Cardiac septum (tissue), 1 donor: ENCODE measurements at regions of chr3 and their contacts with region 1.

Region 1: GRCh38 chr3:25156626-25157025 is 271.4 kb upstream of the RARB start:
- DNase-seq: no peak

Region 2: GRCh38 chr3:25044762-25045710 is 111.6 kb before region 1 on chr3:
- intact Hi-C with region 1: loop called (anchors 5 kb)
- DNase-seq: no peak